Calu3 (cell line): ENCODE measurements at regions of chr16 and their contacts with region 1.

Region 1: GRCh38 chr16:4548124-4548523 is 8.0 kb upstream of the C16orf96 start:
- DNase-seq: no peak
- H3K4me3 Mint-ChIP-seq: no peak overlapping the region
- H3K27ac Mint-ChIP-seq: no peak overlapping the region
- H3K4me1 Mint-ChIP-seq: no peaks in the 10 kb centered on the region
- H3K27me3 Mint-ChIP-seq: peaks cover 83% of the 10 kb centered on the region
- CTCF ChIP-seq: no peak

Region 2: DNA sequence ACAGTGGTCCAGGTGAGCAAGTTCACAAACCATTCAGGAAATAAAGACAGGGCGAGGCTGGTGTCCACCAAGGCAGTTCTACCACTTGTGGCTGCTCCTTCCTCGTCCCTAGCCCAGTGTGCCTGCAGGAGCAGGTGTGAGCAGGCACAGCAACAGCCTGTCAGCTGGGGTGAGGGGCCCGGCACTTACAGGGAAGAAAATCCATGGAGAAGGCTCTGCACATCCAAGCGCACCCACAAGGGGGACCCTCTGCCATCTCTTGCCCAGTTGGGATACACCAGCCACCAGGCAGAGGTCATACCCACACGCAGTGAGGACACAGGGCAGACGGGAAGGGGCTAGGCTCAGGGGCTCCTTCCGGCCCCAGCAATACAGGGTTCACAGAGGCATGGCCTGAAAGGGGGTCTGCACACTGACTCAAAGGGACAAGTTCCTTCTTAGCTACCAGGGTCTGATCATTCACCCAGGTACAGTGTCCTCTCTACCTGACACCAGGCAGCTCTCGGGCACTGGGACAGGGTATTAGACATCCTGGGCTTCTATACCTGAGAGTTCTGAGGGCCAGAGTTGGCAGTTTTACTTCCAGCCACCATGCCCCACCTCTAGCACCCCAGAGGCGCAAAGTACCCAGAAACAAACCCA is 36.6 kb before region 1 on chr16:
- CTCF ChIA-PET with region 1: interaction called, 8 read pairs
- intact Hi-C with region 1: loop called (anchors 5 kb)
- DNase-seq: peak; percentile 73
- H3K4me3 Mint-ChIP-seq: no peak overlapping the region
- H3K27ac Mint-ChIP-seq: peak overlapping the region; percentile 18
- H3K4me1 Mint-ChIP-seq: no peaks in the 10 kb centered on the region
- H3K27me3 Mint-ChIP-seq: no peaks in the 10 kb centered on the region
- CTCF ChIP-seq: peak; percentile 66